ENCODE measurements at regions of chr6 and their contacts with region 1.

Region 1: GRCh38 chr6:158290659-158291058 is 21.6 kb upstream of the TULP4 start:
- DNase-seq: peak; percentile 85
- H3K4me3 ChIP-seq: peak overlapping the region; percentile 61
- H3K27ac ChIP-seq: peak overlapping the region; percentile 77
- H3K4me1 ChIP-seq: peaks cover 49% of the 10 kb centered on the region
- CTCF ChIP-seq: no peak

Region 2: DNA sequence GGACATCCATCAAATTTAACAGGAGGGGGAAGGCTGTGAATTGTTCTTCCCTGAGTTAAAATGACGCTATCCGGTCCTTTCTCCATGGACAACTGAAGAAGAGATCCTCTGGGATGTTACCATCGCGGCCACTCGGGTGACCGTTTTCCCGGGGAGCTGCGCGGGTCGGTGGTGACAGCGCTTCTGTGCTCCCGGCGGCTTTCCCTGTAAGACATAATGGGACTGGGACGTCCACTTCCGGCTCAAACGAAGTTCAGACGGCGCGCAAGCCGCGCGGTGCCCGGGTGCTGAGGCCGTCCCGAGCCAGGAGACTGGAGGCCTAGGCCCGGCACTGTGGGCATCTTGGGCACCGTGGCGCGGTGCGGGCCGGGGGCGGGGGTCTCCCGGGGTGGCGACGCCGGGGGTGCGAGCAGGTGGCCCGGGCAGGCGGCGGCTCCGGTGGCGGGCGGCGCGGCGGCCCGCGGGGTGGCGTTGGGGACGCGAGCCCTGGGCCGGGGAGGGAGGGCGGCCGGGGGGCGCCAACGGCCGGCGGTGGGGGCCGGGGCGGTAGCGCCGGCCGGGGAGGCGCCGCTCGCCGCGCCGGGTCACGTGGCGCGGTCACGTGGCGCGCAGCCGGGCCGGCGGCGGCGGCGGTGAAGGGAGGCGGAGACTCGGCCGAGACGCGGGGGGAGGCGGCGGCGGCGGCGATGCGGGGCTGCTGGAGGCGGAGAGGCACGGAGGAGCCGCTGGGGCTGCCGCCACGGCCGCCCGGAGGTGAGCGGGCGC is 58.9 kb before region 1 on chr6:
- CTCF ChIA-PET with region 1: no interaction called
- POLR2A ChIA-PET with region 1: no interaction called
- intact Hi-C with region 1: loop called (anchors 2 kb)
- DNase-seq: peak; percentile 78
- H3K4me3 ChIP-seq: peak overlapping the region; percentile 77
- H3K27ac ChIP-seq: peak overlapping the region; percentile 22
- H3K4me1 ChIP-seq: peaks cover 26% of the 10 kb centered on the region
- CTCF ChIP-seq: no peak

Region 3: DNA sequence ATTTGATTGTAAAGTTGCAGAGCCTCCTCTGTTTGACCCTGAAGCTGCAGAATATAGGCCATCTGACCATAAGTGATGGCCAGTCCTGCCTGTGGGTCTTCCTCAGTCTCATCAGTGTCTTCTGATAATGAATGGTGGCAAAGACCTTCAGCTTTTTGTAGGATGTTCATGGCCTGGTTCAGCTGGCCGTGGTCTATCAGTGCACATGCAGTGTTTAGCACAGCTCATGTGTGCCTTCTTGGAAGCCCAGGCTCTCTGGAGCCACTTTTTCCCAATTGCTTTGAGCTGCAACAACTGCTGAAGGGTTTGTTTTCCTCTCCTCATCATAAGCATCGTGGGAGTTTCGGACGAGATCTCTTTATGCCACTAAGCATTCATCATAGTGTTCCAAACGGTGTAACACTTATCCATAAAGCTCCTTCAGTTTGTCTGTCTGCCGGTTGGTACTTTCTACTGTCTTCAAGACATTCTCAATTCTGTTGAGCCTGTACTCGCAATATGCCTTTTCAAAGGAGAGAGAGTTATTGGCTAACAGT is 48.5 kb before region 1 on chr6:
- CTCF ChIA-PET with region 1: no interaction called
- POLR2A ChIA-PET with region 1: interaction called, 5 read pairs
- intact Hi-C with region 1: loop called (anchors 2 kb)
- DNase-seq: no peak
- H3K4me3 ChIP-seq: peak overlapping the region; percentile 44
- H3K27ac ChIP-seq: peak overlapping the region; percentile 77
- H3K4me1 ChIP-seq: peaks cover 42% of the 10 kb centered on the region
- CTCF ChIP-seq: no peak

Region 4: GRCh38 chr6:158373214-158373613 is 82.6 kb after region 1 on chr6:
- CTCF ChIA-PET with region 1: no interaction called
- POLR2A ChIA-PET with region 1: no interaction called
- intact Hi-C with region 1: no loop called
- DNase-seq: no peak
- H3K4me3 ChIP-seq: no peak overlapping the region
- H3K27ac ChIP-seq: no peak overlapping the region
- H3K4me1 ChIP-seq: no peaks in the 10 kb centered on the region
- CTCF ChIP-seq: no peak